Activated CD4-positive, alpha-beta memory T cell treated with anti-CD3 and anti-CD28 coated beads for 36 hours (primary cell): ENCODE measurements at regions of chr22 and their contacts with region 1.

Region 1: DNA sequence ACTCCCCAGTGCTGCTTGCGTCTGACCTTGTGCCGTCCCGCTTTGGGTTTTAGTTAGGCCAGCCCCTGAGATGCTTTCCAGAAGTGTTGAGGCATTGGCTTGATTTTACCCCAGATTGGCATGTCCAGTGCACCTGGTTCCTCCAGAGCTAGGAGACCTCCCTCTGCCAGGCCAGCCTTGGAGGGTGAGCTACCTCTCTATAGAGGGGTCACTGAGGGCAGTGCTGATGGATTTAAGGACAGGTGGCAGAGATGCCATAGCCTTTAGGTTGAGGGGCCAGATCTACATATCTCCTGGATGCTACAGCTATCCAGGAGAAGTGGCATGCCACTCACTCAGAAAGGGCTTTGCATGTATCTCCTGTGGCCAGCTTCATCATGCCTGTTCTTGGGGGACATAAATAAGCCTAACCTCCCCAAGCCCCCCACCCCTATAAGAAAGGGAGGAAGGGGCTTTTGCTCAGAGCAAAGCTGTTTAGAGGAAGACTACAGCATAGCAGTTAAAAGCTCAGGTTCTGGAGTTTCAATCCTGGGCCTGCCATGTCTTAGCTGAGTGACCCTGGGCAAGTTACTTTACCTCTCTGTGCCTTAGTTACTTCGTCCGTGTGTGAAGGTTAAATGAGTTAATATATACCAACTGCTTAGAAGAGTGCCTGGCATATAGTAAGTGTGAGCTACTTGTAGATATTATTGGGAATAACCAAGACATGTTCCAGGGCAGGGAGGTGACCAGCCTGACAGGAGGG is 6.4 kb downstream of the UBE2L3 start:
- DNase-seq: no peak
- H3K4me3 Mint-ChIP-seq: no peak overlapping the region
- H3K27ac Mint-ChIP-seq: peak overlapping the region; percentile 60
- H3K4me1 Mint-ChIP-seq: peaks cover 77% of the 10 kb centered on the region
- H3K27me3 Mint-ChIP-seq: no peaks in the 10 kb centered on the region

Region 2: DNA sequence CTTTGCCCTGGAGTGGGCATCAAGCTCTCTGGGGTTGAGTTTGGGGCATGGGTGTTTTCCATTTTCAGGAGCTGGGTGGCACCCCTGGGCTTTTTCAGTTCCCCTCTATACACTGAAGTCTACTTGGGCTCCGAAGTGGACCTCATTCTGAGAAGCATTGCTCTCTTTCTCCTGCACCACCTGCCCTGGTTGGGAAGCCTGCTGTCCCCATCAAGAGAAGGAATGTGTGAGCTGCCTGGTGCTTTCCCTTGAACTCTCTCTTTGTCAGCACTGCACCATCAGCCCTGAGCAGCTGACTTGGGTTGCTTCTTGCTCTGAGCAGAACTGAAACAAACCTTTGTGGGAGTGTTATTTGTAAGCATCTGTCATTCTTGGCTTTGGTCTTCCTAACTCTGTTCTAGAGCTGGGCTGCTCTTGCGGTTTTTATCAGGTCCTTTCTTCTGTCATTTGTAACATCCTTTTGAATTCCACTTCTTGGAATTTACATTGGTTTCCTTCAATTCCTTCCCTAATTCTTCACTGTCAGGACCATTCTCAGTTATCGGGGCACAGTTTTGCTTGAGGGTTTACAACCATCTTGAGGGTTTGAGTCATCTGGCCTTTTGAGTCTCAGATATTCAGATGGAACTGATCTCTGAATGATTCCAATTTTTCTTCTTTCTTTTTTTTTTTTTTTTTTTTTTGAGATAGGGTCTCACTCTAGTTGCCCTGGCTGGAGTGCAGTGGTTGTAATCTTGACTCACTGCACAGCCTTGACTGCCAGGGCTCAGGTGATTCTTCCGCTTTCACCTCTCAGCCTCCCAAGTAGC is 14.1 kb after region 1 on chr22:
- CTCF ChIA-PET with region 1: interaction called, 7 read pairs
- POLR2A ChIA-PET with region 1: interaction called, 17 read pairs
- intact Hi-C with region 1: loop called (anchors 1 kb)
- DNase-seq: peak; percentile 80
- H3K4me3 Mint-ChIP-seq: no peak overlapping the region
- H3K27ac Mint-ChIP-seq: peak overlapping the region; percentile 74
- H3K4me1 Mint-ChIP-seq: peaks cover 57% of the 10 kb centered on the region
- H3K27me3 Mint-ChIP-seq: no peaks in the 10 kb centered on the region

Region 3: GRCh38 chr22:21606775-21607174 is 32.9 kb after region 1 on chr22:
- CTCF ChIA-PET with region 1: no interaction called
- POLR2A ChIA-PET with region 1: no interaction called
- intact Hi-C with region 1: no loop called
- DNase-seq: no peak
- H3K4me3 Mint-ChIP-seq: no peak overlapping the region
- H3K27ac Mint-ChIP-seq: no peak overlapping the region
- H3K4me1 Mint-ChIP-seq: peaks cover 33% of the 10 kb centered on the region
- H3K27me3 Mint-ChIP-seq: no peaks in the 10 kb centered on the region

Region 4: GRCh38 chr22:21652547-21653545 is 78.9 kb after region 1 on chr22:
- CTCF ChIA-PET with region 1: no interaction called
- POLR2A ChIA-PET with region 1: no interaction called
- intact Hi-C with region 1: no loop called
- DNase-seq: no peak
- H3K4me3 Mint-ChIP-seq: peak overlapping the region; percentile 85
- H3K27ac Mint-ChIP-seq: no peak overlapping the region
- H3K4me1 Mint-ChIP-seq: peaks cover 23% of the 10 kb centered on the region
- H3K27me3 Mint-ChIP-seq: no peaks in the 10 kb centered on the region

Region 5: GRCh38 chr22:22076932-22077703 is 503.2 kb after region 1 on chr22:
- CTCF ChIA-PET with region 1: no interaction called
- POLR2A ChIA-PET with region 1: no interaction called
- intact Hi-C with region 1: no loop called
- DNase-seq: no peak
- H3K4me3 Mint-ChIP-seq: no peak overlapping the region
- H3K27ac Mint-ChIP-seq: no peak overlapping the region
- H3K4me1 Mint-ChIP-seq: no peaks in the 10 kb centered on the region
- H3K27me3 Mint-ChIP-seq: peaks cover 31% of the 10 kb centered on the region